H1 (cell line): ENCODE measurements at regions of chr17 and their contacts with region 1.

Region 1: GRCh38 chr17:37737081-37737480 is 7.8 kb downstream of the HNF1B start:
- DNase-seq: no peak
- H3K4me3 ChIP-seq: no peak overlapping the region
- H3K27ac ChIP-seq: no peak overlapping the region
- H3K4me1 ChIP-seq: peaks cover 0 to 3% (median 0%) of the 10 kb centered on the region in 4 experiments; a peak in 2 of 7 replicates
- H3K27me3 ChIP-seq: peaks cover 15 to 58% (median 42%) of the 10 kb centered on the region in 4 experiments
- CTCF ChIP-seq: peak in 1 of 3 experiments; percentile 13; a peak in 1 of 4 replicates
- EP300 ChIP-seq: no peak
- POLR2A ChIP-seq: no peak
- RAD21 ChIP-seq: peak; percentile 15 to 30; a peak in 2 of 4 replicates

Region 2: GRCh38 chr17:37725601-37726146 is 11.4 kb before region 1 on chr17:
- CTCF ChIA-PET with region 1: interaction called, 30 read pairs
- POLR2A ChIA-PET with region 1: no interaction called
- DNase-seq: no peak
- H3K4me3 ChIP-seq: no peak overlapping the region
- H3K27ac ChIP-seq: no peak overlapping the region
- H3K4me1 ChIP-seq: no peaks in the 10 kb centered on the region
- H3K27me3 ChIP-seq: peaks cover 0 to 6% (median 3%) of the 10 kb centered on the region in 4 experiments; a peak in 4 of 7 replicates
- CTCF ChIP-seq: no peak
- EP300 ChIP-seq: no peak
- POLR2A ChIP-seq: no peak
- RAD21 ChIP-seq: no peak

Region 3: GRCh38 chr17:37752482-37752881 is 15.4 kb after region 1 on chr17:
- CTCF ChIA-PET with region 1: no interaction called
- POLR2A ChIA-PET with region 1: no interaction called
- DNase-seq: no peak
- H3K4me3 ChIP-seq: no peak overlapping the region
- H3K27ac ChIP-seq: no peak overlapping the region
- H3K4me1 ChIP-seq: no peaks in the 10 kb centered on the region
- H3K27me3 ChIP-seq: peaks cover 4 to 18% (median 12%) of the 10 kb centered on the region in 4 experiments
- CTCF ChIP-seq: no peak
- EP300 ChIP-seq: no peak
- POLR2A ChIP-seq: no peak
- RAD21 ChIP-seq: no peak

Region 4: GRCh38 chr17:37764383-37764782 is 27.3 kb after region 1 on chr17:
- CTCF ChIA-PET with region 1: no interaction called
- POLR2A ChIA-PET with region 1: no interaction called
- DNase-seq: no peak
- H3K4me3 ChIP-seq: no peak overlapping the region
- H3K27ac ChIP-seq: no peak overlapping the region
- H3K4me1 ChIP-seq: no peaks in the 10 kb centered on the region
- H3K27me3 ChIP-seq: no peaks in the 10 kb centered on the region
- CTCF ChIP-seq: no peak
- EP300 ChIP-seq: no peak
- POLR2A ChIP-seq: no peak
- RAD21 ChIP-seq: no peak